ENCODE measurements at regions of chr20 and their contacts with region 1.

Region 1: GRCh38 chr20:63864847-63865640 is at the start of gene TPD52L2:
- DNase-seq: peak; percentile 100
- H3K4me3 ChIP-seq: peak within 1 kb of the TSS; percentile 97
- H3K4me3 Mint-ChIP-seq: peak within 1 kb of the TSS; percentile 90
- H3K27ac Mint-ChIP-seq: peak within 1 kb of the TSS; percentile 91
- H3K4me1 ChIP-seq: peaks cover 15% of the 10 kb centered on the region
- H3K4me1 Mint-ChIP-seq: peaks cover 8% of the 10 kb centered on the region
- H3K27me3 ChIP-seq: no peaks in the 10 kb centered on the region
- H3K27me3 Mint-ChIP-seq: no peaks in the 10 kb centered on the region
- CTCF ChIP-seq: no peak
- total RNA-seq, gene TPD52L2: 286 and 293 TPM in 2 replicates

Region 2: GRCh38 chr20:63627129-63627750 is 237.8 kb before region 1 on chr20:
- CTCF ChIA-PET with region 1: no interaction called
- POLR2A ChIA-PET with region 1: interaction called, 19 read pairs
- intact Hi-C with region 1: loop called (anchors 10 kb)
- DNase-seq: peak; percentile 98 to 100
- H3K4me3 ChIP-seq: peak overlapping the region; percentile 91
- H3K4me3 Mint-ChIP-seq: peak overlapping the region; percentile 80
- H3K27ac Mint-ChIP-seq: peak overlapping the region; percentile 80
- H3K4me1 ChIP-seq: peaks cover 18% of the 10 kb centered on the region
- H3K4me1 Mint-ChIP-seq: peaks cover 25% of the 10 kb centered on the region
- H3K27me3 ChIP-seq: no peaks in the 10 kb centered on the region
- H3K27me3 Mint-ChIP-seq: no peaks in the 10 kb centered on the region
- CTCF ChIP-seq: no peak

Region 3: DNA sequence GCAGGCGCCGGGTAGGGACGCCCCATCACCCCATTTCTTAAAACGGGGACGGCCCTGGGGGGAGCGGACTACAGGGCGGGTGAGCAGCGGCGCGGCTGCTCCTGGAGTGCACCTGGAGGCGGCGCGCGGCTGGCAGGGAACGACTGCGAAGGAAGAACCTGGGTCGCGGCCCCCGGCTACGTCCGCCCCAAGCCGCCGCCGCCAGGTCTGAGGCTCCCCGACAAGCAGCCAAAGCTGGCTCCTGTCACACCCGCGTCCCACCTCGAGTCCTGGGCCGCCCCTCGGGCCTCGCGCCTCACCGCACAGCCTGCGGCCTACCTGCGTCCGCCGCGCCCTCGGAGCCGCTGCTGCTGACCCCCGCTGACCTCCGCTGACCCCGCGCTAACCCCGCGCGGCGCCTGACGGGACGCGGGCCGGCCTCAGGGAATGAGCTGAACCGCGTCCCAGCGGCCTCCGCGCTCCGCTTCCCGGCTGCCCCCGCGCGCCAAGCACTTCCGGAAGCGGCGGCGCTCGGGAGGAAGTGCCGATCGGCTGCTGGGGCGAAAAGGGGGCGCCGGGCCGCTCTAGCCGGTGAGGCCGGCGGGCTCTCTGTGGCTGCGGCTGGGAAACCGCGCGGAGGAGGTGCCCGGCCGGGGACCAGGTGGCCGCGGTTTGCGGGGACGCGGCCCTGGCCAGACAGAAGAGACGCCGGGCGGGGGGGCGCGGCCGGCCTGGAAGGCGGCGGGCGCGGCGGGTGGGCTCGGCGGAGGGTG is 157.3 kb before region 1 on chr20 and contains the starts of genes ARFRP1 and ZGPAT:
- CTCF ChIA-PET with region 1: interaction called, 11 read pairs
- POLR2A ChIA-PET with region 1: interaction called, 33 read pairs
- intact Hi-C with region 1: loop called (anchors 1 kb)
- DNase-seq: peak; percentile 94 to 99
- H3K4me3 ChIP-seq: peak within 1 kb of the TSS; percentile 96
- H3K4me3 Mint-ChIP-seq: peak within 1 kb of the TSS; percentile 87
- H3K27ac Mint-ChIP-seq: peak within 1 kb of the TSS; percentile 84
- H3K4me1 ChIP-seq: peaks cover 14% of the 10 kb centered on the region
- H3K4me1 Mint-ChIP-seq: peaks cover 16% of the 10 kb centered on the region
- H3K27me3 ChIP-seq: no peaks in the 10 kb centered on the region
- H3K27me3 Mint-ChIP-seq: no peaks in the 10 kb centered on the region
- CTCF ChIP-seq: peak in 1 of 2 experiments; percentile 13
- total RNA-seq, gene ARFRP1: 119 and 126 TPM in 2 replicates
- total RNA-seq, gene ZGPAT: 69.3 and 74.7 TPM in 2 replicates

Region 4: GRCh38 chr20:63819224-63819921 is 45.7 kb before region 1 on chr20:
- CTCF ChIA-PET with region 1: no interaction called
- POLR2A ChIA-PET with region 1: no interaction called
- intact Hi-C with region 1: loop called (anchors 1 kb)
- DNase-seq: peak; percentile 72
- H3K4me3 ChIP-seq: peak overlapping the region; percentile 17; the same call in 1 of the 2 replicates
- H3K4me3 Mint-ChIP-seq: peak overlapping the region; percentile 54
- H3K27ac Mint-ChIP-seq: no peak overlapping the region
- H3K4me1 ChIP-seq: peaks cover 10% of the 10 kb centered on the region
- H3K4me1 Mint-ChIP-seq: peaks cover 20% of the 10 kb centered on the region
- H3K27me3 ChIP-seq: no peaks in the 10 kb centered on the region
- H3K27me3 Mint-ChIP-seq: no peaks in the 10 kb centered on the region
- CTCF ChIP-seq: peak; percentile 51 to 84

Region 5: DNA sequence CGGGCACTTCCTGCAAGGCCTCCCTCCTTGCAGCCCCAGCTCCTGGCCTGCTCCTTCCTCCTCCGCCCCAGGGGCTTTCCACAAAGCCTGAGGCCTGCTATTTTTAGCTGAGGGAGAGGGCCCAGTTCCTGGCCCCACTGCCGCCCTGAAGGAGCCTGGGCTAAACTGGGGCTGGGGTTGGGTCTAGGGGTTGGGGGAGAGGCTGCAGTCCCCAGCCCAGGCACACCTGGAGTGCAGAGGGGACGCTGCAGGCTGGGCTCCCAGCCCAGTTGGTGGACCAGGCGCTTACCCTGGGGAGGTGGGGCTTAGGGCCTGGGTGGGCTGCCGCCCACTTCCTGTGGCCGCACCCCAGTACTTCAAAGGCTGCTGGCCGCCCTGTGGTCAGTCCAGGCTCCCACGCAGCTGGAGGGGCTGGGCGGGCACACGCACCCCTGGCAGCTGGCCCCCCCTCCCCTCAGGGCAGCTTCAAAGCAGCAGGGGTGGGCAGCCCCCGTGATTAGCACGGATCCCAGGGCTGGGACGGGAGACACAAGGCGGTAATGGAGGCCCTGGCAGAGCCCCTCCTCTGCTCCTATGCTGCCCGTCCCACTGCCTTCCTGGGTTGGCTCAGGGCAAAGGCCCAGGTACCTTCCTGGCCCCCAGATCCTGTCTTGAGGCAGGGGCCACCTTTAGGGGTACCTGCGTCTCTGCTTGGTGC is 10.8 kb before region 1 on chr20:
- CTCF ChIA-PET with region 1: interaction called, 3 read pairs
- POLR2A ChIA-PET with region 1: interaction called, 13 read pairs
- intact Hi-C with region 1: no loop called
- DNase-seq: no peak
- H3K4me3 ChIP-seq: no peak overlapping the region
- H3K4me3 Mint-ChIP-seq: no peak overlapping the region
- H3K27ac Mint-ChIP-seq: no peak overlapping the region
- H3K4me1 ChIP-seq: peaks cover 23% of the 10 kb centered on the region; the same call in 1 of the 2 replicates
- H3K4me1 Mint-ChIP-seq: peaks cover 4% of the 10 kb centered on the region
- H3K27me3 ChIP-seq: no peaks in the 10 kb centered on the region
- H3K27me3 Mint-ChIP-seq: no peaks in the 10 kb centered on the region
- CTCF ChIP-seq: no peak

Region 6: GRCh38 chr20:63929071-63929470 is 64.0 kb after region 1 on chr20:
- CTCF ChIA-PET with region 1: no interaction called
- POLR2A ChIA-PET with region 1: no interaction called
- intact Hi-C with region 1: no loop called
- DNase-seq: no peak
- H3K4me3 ChIP-seq: no peak overlapping the region
- H3K4me3 Mint-ChIP-seq: no peak overlapping the region
- H3K27ac Mint-ChIP-seq: no peak overlapping the region
- H3K4me1 ChIP-seq: no peaks in the 10 kb centered on the region
- H3K4me1 Mint-ChIP-seq: no peaks in the 10 kb centered on the region
- H3K27me3 ChIP-seq: no peaks in the 10 kb centered on the region
- H3K27me3 Mint-ChIP-seq: no peaks in the 10 kb centered on the region
- CTCF ChIP-seq: no peak

Region 7: GRCh38 chr20:63973636-63974402 is 108.8 kb after region 1 on chr20:
- CTCF ChIA-PET with region 1: interaction called, 14 read pairs
- POLR2A ChIA-PET with region 1: interaction called, 26 read pairs
- intact Hi-C with region 1: loop called (anchors 5 kb)
- DNase-seq: peak; percentile 92 to 98
- H3K4me3 ChIP-seq: peak overlapping the region; percentile 38
- H3K4me3 Mint-ChIP-seq: peak overlapping the region; percentile 63
- H3K27ac Mint-ChIP-seq: peak overlapping the region; percentile 1
- H3K4me1 ChIP-seq: peaks cover 26% of the 10 kb centered on the region
- H3K4me1 Mint-ChIP-seq: peaks cover 22% of the 10 kb centered on the region
- H3K27me3 ChIP-seq: no peaks in the 10 kb centered on the region
- H3K27me3 Mint-ChIP-seq: peaks cover 3% of the 10 kb centered on the region
- CTCF ChIP-seq: peak; percentile 100

Measured in Caco-2 (cell line).